ENCODE measurements at regions of chr9 and their contacts with region 1.

Region 1: GRCh38 chr9:91361291-91362050 is at the start of gene AUH:
- DNase-seq: peak; percentile 85
- H3K4me3 Mint-ChIP-seq: peak within 1 kb of the TSS; percentile 97
- H3K27ac Mint-ChIP-seq: peak within 1 kb of the TSS; percentile 94
- H3K4me1 Mint-ChIP-seq: peaks cover 48% of the 10 kb centered on the region
- H3K27me3 Mint-ChIP-seq: no peaks in the 10 kb centered on the region
- total RNA-seq, gene AUH: 50.4 and 53.3 TPM in 2 replicates

Region 2: DNA sequence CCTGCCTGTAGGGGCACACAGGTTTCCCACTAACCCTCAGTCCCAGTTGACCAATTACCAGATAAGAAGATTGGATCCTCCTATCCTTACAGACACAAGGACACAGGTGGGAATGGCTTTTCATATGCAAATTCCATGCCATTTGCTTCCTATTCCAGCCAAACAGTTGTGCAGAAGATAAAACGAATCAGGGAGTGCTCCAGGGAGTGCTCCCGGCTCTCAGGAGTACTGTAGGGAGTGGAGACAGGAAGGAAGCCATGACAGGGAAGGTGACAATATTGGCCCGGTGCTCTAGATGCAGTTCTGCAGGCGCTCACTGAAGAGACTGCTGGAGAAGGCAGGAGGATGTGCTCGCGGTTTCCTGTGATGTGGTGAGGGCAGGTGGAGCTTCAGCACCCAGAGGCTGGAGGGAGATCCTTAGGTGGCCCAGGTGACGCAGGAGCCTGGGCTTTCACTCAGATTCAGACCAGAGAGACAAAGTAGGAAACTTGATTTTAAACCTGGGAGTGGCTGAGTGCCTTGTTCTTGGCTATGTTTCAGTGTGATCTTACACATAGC is 259.8 kb before region 1 on chr9:
- intact Hi-C with region 1: loop called (anchors 2 kb)
- DNase-seq: peak; percentile 85
- H3K4me3 Mint-ChIP-seq: peak overlapping the region; percentile 53
- H3K27ac Mint-ChIP-seq: peak overlapping the region; percentile 85
- H3K4me1 Mint-ChIP-seq: peaks cover 72% of the 10 kb centered on the region
- H3K27me3 Mint-ChIP-seq: peaks cover 8% of the 10 kb centered on the region

Region 3: DNA sequence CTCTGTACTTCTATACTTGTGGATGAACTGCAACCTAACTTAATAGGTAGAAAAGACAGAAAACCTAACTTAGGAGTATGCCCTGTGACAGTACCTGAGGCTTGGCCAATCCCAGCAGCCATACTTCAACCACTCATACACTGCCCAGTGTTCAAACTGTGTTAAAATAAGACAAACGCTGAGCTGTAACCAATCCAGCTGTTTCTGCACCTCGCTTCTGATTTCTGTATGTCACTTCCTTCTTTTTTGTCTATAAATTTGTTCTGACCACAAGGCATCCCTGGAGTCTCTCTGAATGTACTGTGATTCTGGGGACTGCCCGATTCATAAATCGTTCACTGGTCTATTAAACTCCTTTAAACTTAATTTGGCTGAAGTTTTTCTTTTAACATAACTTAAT is 41.2 kb before region 1 on chr9:
- intact Hi-C with region 1: no loop called
- DNase-seq: no peak
- H3K4me3 Mint-ChIP-seq: no peak overlapping the region
- H3K27ac Mint-ChIP-seq: no peak overlapping the region
- H3K4me1 Mint-ChIP-seq: peaks cover 15% of the 10 kb centered on the region
- H3K27me3 Mint-ChIP-seq: no peaks in the 10 kb centered on the region

Region 4: GRCh38 chr9:91395553-91396471 is 34.3 kb after region 1 on chr9:
- intact Hi-C with region 1: loop called (anchors 1 kb)
- DNase-seq: peak; percentile 33
- H3K4me3 Mint-ChIP-seq: peak overlapping the region; percentile 73
- H3K27ac Mint-ChIP-seq: peak overlapping the region; percentile 84
- H3K4me1 Mint-ChIP-seq: peaks cover 21% of the 10 kb centered on the region
- H3K27me3 Mint-ChIP-seq: peaks cover 11% of the 10 kb centered on the region

Region 5: DNA sequence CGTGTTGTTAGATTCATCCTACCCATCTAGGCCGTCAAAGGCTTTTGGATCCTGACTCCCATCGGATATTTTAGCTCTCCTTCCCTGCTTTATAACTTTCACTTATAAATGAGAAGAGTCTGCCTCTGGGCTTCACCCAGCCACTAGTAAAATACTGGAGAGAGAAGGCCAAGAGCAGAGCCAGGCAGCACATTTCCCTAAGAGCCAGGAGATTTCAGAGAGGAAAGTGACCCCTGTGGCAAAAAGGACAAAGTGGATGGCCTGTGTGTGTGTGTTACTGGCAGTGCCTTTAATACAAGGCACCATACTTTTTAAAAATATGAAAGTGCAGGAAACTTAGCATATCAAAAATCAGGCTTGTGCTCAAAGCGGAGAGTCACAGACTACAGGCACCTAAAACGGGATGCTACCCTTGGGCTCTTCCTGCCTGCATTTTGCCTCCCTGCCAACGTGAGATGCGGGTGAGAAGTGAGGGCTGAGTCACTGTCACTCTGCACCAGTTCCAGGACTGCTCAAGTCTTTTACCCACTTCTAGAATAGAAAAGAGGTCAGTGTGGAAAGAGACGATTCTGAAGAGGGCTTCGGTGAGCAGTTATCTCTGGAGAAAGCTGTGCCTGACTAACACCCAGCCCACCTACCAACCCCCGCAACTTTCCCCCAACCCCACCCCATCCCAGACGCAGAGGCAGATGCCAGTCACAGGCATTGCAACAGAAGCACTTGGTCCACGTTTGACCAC is 46.3 kb after region 1 on chr9:
- intact Hi-C with region 1: no loop called
- DNase-seq: no peak
- H3K4me3 Mint-ChIP-seq: no peak overlapping the region
- H3K27ac Mint-ChIP-seq: no peak overlapping the region
- H3K4me1 Mint-ChIP-seq: peaks cover 54% of the 10 kb centered on the region
- H3K27me3 Mint-ChIP-seq: no peaks in the 10 kb centered on the region

Region 6: GRCh38 chr9:91711755-91712601 is 350.5 kb after region 1 on chr9:
- intact Hi-C with region 1: loop called (anchors 1 kb)
- DNase-seq: peak; percentile 67
- H3K4me3 Mint-ChIP-seq: no peak overlapping the region
- H3K27ac Mint-ChIP-seq: no peak overlapping the region
- H3K4me1 Mint-ChIP-seq: no peaks in the 10 kb centered on the region
- H3K27me3 Mint-ChIP-seq: peaks cover 9% of the 10 kb centered on the region